ENCODE measurements at regions of chr22 and their contacts with region 1.

Region 1: GRCh38 chr22:37019309-37020125 is at the starts of genes MPST and TST:
- H3K4me3 Mint-ChIP-seq: peak within 1 kb of the TSS; percentile 97
- H3K27ac Mint-ChIP-seq: peak within 1 kb of the TSS; percentile 91
- H3K4me1 Mint-ChIP-seq: peaks cover 57% of the 10 kb centered on the region
- H3K27me3 Mint-ChIP-seq: no peaks in the 10 kb centered on the region

Region 2: DNA sequence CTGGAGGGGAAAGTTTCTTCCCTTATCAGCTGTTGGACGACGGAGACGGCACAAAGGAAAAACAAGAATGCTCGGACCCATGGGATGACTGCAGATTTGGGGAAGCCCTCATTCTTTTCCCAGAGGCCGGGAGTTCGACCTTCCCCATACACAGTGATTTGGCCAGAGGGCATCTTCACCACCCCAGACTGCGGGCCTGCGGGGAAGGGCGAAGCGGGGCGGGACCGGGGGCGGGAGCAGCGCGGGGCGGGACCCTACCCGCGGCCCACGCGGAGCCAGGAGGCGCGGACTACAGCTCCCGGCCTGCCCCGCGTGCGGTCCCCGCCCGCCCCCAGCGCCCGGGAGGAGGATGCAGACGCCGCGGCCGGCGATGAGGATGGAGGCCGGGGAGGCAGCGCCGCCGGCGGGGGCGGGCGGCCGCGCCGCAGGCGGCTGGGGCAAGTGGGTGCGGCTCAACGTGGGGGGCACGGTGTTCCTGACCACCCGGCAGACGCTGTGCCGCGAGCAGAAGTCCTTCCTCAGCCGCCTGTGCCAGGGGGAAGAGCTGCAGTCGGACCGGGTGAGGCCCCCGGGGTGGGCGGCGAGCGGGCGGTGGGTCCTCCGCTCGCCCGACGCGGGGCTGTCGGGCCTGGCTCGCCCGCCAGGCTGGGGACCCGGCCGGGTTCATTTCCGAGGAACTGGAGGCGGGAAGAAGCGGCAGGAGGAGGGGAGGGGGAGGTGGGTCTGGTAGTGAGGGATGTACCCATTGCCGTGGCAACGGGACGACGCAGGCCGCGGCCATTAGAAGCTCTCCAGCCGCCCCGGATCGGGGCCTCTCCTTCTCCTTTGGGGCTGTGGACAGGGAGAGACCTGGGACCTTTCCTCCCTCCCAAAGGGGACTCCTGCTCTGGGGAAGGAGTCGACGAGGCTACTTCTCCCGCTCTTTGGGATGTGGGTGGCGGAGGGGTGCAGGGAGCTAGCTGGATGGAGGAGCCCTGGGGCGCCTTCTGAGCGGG is 32.2 kb after region 1 on chr22 and contains the start of gene KCTD17:
- intact Hi-C with region 1: loop called (anchors 2 kb)
- H3K4me3 Mint-ChIP-seq: peak within 1 kb of the TSS; percentile 79
- H3K27ac Mint-ChIP-seq: peak within 1 kb of the TSS; percentile 91
- H3K4me1 Mint-ChIP-seq: peaks cover 51% of the 10 kb centered on the region
- H3K27me3 Mint-ChIP-seq: no peaks in the 10 kb centered on the region

Measured in dendritic cell treated with granulocyte-macrophage colony-stimulating factor and Interleukin-4, amounts not matched to agents 40 ng/mL and 50 ng/mL, for 4 days (primary cell).